H1 (cell line): ENCODE measurements at regions of chr5 and their contacts with region 1.

Region 1: GRCh38 chr5:160021831-160022446 is 13.0 kb downstream of the TTC1 start:
- DNase-seq: peak in 1 of 2 experiments; percentile 57
- H3K4me3 ChIP-seq: no peak overlapping the region
- H3K27ac ChIP-seq: no peak overlapping the region
- H3K4me1 ChIP-seq: no peaks in the 10 kb centered on the region
- H3K27me3 ChIP-seq: no peaks in the 10 kb centered on the region
- CTCF ChIP-seq: peak in 2 of 3 experiments; percentile 72 to 75; a peak in 3 of 4 replicates
- EP300 ChIP-seq: no peak
- POLR2A ChIP-seq: no peak
- RAD21 ChIP-seq: peak; percentile 83 to 90

Region 2: GRCh38 chr5:159874263-159874662 is 147.7 kb before region 1 on chr5:
- CTCF ChIA-PET with region 1: no interaction called
- POLR2A ChIA-PET with region 1: no interaction called
- DNase-seq: no peak
- H3K4me3 ChIP-seq: no peak overlapping the region
- H3K27ac ChIP-seq: no peak overlapping the region
- H3K4me1 ChIP-seq: peaks cover 1 to 3% (median 2%) of the 10 kb centered on the region in 4 experiments; a peak in 4 of 7 replicates
- H3K27me3 ChIP-seq: no peaks in the 10 kb centered on the region
- CTCF ChIP-seq: no peak
- EP300 ChIP-seq: no peak
- POLR2A ChIP-seq: no peak
- RAD21 ChIP-seq: no peak

Region 3: DNA sequence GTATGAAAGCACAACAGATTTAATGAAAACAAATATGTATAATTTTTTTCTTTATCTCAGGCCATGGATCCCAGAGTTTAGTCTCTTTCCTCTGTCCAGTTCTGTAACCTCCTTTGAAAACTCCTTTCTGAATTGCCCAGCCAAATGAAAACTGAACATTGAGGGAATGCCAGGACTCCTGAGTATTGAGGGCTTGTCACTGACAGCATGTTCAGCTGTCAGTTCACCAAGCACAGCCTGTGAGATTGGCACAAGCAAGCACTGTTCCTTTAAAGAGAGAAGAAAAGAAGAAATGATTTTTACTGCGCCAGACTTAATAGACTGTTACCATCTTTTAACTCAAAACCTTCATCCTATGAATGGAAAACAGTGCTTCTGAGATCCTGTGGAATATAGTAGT is 14.3 kb after region 1 on chr5:
- CTCF ChIA-PET with region 1: interaction called, 32 read pairs
- POLR2A ChIA-PET with region 1: interaction called, 3 read pairs
- DNase-seq: no peak
- H3K4me3 ChIP-seq: no peak overlapping the region
- H3K27ac ChIP-seq: no peak overlapping the region
- H3K4me1 ChIP-seq: no peaks in the 10 kb centered on the region
- H3K27me3 ChIP-seq: peaks cover 0 to 1% (median 0%) of the 10 kb centered on the region in 4 experiments; a peak in 1 of 7 replicates
- CTCF ChIP-seq: no peak
- EP300 ChIP-seq: no peak
- POLR2A ChIP-seq: no peak
- RAD21 ChIP-seq: no peak

Region 4: GRCh38 chr5:160054831-160055230 is 32.9 kb after region 1 on chr5:
- CTCF ChIA-PET with region 1: interaction called, 17 read pairs
- POLR2A ChIA-PET with region 1: no interaction called
- DNase-seq: no peak
- H3K4me3 ChIP-seq: no peak overlapping the region
- H3K27ac ChIP-seq: no peak overlapping the region
- H3K4me1 ChIP-seq: no peaks in the 10 kb centered on the region
- H3K27me3 ChIP-seq: no peaks in the 10 kb centered on the region
- CTCF ChIP-seq: no peak
- EP300 ChIP-seq: no peak
- POLR2A ChIP-seq: no peak
- RAD21 ChIP-seq: no peak

Region 5: DNA sequence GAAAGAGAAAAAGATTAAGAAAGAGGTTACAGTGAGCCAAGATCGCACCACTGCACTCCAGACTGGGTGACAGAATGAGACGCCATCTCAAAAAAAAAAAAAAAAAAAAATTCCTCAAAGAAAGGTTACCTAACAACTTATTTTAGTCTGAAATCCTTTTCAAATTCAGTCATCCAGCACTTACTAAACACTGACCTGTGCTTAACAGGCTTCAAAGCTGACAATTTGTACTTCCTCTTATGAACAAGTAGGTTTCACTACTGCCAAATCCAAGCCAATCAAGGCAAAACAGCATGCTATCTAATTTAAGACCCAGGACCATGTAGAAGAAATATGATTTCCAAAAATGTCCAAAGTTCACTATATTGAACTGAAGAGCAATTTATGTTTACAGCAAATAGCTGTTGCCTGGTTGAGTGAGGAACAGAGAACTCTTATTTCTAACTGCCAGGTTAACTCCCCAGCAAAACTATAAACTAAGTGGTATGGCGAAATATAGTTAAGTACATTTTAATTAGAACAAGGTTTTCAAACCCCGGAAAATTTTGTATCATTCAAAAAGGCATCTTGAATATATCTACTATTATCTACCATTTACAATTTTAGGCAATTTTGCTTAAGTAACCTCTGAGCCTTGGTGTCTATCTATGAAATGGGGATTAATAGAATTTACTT is 83.9 kb after region 1 on chr5:
- CTCF ChIA-PET with region 1: interaction called, 13 read pairs
- POLR2A ChIA-PET with region 1: no interaction called
- DNase-seq: no peak
- H3K4me3 ChIP-seq: no peak overlapping the region
- H3K27ac ChIP-seq: no peak overlapping the region
- H3K4me1 ChIP-seq: no peaks in the 10 kb centered on the region; a peak in 1 of 7 replicates
- H3K27me3 ChIP-seq: no peaks in the 10 kb centered on the region
- CTCF ChIP-seq: no peak
- EP300 ChIP-seq: no peak
- POLR2A ChIP-seq: no peak
- RAD21 ChIP-seq: no peak